ENCODE measurements at regions of chr1 and their contacts with region 1.

Region 1: GRCh38 chr1:119662034-119662437 is 14.0 kb upstream of the ZNF697 start:
- ATAC-seq: no peak
- H3K4me3 ChIP-seq: no peak overlapping the region
- H3K27ac ChIP-seq: no peak overlapping the region
- H3K4me1 ChIP-seq: no peaks in the 10 kb centered on the region

Region 2: GRCh38 chr1:119613769-119614720 is 48.0 kb before region 1 on chr1:
- in situ Hi-C with region 1: loop called in 2 of 9 experiments (anchors 10 kb)
- ATAC-seq: peak; percentile 89 to 99 (median 94)
- H3K4me3 ChIP-seq: no peak overlapping the region
- H3K27ac ChIP-seq: no peak overlapping the region
- H3K4me1 ChIP-seq: no peaks in the 10 kb centered on the region